ENCODE measurements at regions of chr19 and their contacts with region 1.

Region 1: GRCh38 chr19:20039203-20039723 is at the start of gene ZNF682:
- DNase-seq: peak; percentile 94 to 97
- ATAC-seq: peak; percentile 98 to 100 (median 99)
- H3K4me3 ChIP-seq: peak within 1 kb of the TSS; percentile 76
- H3K4me3 Mint-ChIP-seq: peak within 1 kb of the TSS; percentile 96
- H3K27ac ChIP-seq: peak within 1 kb of the TSS; percentile 68
- H3K27ac Mint-ChIP-seq: peak within 1 kb of the TSS; percentile 83 to 97
- H3K4me1 ChIP-seq: peaks cover 13% of the 10 kb centered on the region
- H3K4me1 Mint-ChIP-seq: peaks cover 11% of the 10 kb centered on the region in 2 donors
- H3K27me3 ChIP-seq: no peaks in the 10 kb centered on the region
- H3K27me3 Mint-ChIP-seq: peaks cover 5 to 6% of the 10 kb centered on the region in 2 donors
- CTCF ChIP-seq: no peak
- total RNA-seq, gene ZNF682: 9.6 to 16.1 (median 13.4) TPM

Region 2: DNA sequence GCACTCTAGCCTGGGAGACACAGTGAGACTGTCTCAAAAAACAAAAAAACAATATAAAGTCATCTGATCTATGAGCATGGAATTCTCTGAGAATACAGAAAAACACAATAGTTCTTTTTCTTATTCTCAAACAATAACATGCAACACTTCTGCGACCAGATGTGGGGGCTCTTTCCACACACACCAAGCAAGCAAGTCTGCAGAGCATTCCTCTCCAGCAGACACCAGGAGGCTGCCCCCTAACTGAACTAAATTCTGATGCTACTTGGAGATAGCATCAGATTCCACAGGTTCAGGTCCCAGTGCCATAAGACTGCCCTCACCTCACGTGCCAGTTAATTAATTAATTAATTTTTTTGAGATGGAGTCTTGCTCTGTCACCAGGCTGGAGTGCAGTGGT is 342.9 kb before region 1 on chr19:
- intact Hi-C with region 1: no loop called
- DNase-seq: no peak
- ATAC-seq: no peak
- H3K4me3 ChIP-seq: no peak overlapping the region
- H3K4me3 Mint-ChIP-seq: no peak overlapping the region
- H3K27ac ChIP-seq: no peak overlapping the region
- H3K27ac Mint-ChIP-seq: no peak overlapping the region
- H3K4me1 ChIP-seq: no peaks in the 10 kb centered on the region
- H3K4me1 Mint-ChIP-seq: no peaks in the 10 kb centered on the region
- H3K27me3 ChIP-seq: no peaks in the 10 kb centered on the region
- H3K27me3 Mint-ChIP-seq: no peaks in the 10 kb centered on the region
- CTCF ChIP-seq: no peak

Region 3: GRCh38 chr19:20151617-20152145 is 112.4 kb after region 1 on chr19:
- intact Hi-C with region 1: no loop called
- DNase-seq: no peak
- ATAC-seq: no peak
- H3K4me3 ChIP-seq: no peak overlapping the region
- H3K4me3 Mint-ChIP-seq: no peak overlapping the region
- H3K27ac ChIP-seq: no peak overlapping the region
- H3K27ac Mint-ChIP-seq: no peak overlapping the region
- H3K4me1 ChIP-seq: no peaks in the 10 kb centered on the region
- H3K4me1 Mint-ChIP-seq: no peaks in the 10 kb centered on the region
- H3K27me3 ChIP-seq: no peaks in the 10 kb centered on the region
- H3K27me3 Mint-ChIP-seq: no peaks in the 10 kb centered on the region
- CTCF ChIP-seq: no peak

Region 4: DNA sequence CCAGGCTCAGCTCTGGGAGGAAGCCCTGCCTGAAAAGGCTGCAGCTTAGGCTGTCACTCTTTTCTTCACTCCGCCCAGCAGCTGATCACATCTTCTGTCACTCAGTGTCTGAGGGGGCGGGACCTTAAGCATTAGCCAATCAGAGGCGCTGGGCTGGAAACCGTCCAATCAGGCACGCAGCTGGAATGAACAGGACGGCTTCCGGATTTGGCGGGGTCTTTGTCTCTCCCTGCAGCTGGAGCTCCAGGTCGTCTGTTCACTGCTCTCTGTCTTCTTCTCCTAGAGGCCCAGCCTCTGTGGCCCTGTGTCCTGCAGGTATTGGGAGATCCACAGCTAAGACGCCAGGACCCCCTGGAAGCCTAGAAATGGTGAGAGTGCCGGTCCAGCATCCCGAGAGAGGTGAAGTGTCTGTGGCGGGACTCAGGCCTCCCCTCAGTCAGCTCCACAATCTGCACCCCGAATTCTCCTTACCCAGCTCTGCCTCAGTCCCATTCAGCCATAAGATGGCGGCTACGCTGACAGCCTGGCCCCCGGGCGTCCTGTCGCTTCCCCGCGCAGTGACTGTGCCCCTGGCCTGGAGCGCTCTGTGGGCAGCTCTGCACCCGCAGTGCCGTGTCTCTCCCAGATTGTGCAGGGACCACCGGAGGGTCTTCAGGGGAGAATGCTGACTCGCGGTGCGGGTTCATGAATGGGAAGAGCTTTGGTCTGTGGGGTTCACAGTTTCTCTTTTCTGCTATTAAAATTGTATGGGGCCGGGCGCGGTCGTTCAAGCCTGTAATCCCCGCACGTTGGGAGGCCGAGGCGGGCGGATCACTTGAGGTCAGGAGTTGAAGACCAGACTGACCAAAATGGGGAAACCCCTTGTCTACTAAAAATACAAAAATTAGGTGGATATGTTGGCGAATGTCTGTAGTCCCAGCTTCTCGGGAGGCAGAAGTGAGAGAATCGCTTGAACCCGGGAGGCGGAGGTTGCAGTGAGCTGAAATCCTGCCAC is 737.1 kb after region 1 on chr19 and contains the start of gene ZNF66:
- intact Hi-C with region 1: loop called (anchors 1 kb)
- DNase-seq: peak; percentile 96 to 97
- ATAC-seq: peak; percentile 97 to 99 (median 99)
- H3K4me3 ChIP-seq: peak within 1 kb of the TSS; percentile 80
- H3K4me3 Mint-ChIP-seq: peak within 1 kb of the TSS; percentile 99
- H3K27ac ChIP-seq: peak within 1 kb of the TSS; percentile 78
- H3K27ac Mint-ChIP-seq: peak within 1 kb of the TSS; percentile 97 to 98
- H3K4me1 ChIP-seq: peaks cover 3% of the 10 kb centered on the region
- H3K4me1 Mint-ChIP-seq: peaks cover 13 to 28% of the 10 kb centered on the region in 2 donors
- H3K27me3 ChIP-seq: no peaks in the 10 kb centered on the region
- H3K27me3 Mint-ChIP-seq: no peaks in the 10 kb centered on the region
- CTCF ChIP-seq: no peak
- total RNA-seq, gene ZNF66: 7.7 to 11.8 (median 10.6) TPM

Measured in natural killer cell (primary cell).